ENCODE measurements at regions of chr10 and their contacts with region 1.

Region 1: DNA sequence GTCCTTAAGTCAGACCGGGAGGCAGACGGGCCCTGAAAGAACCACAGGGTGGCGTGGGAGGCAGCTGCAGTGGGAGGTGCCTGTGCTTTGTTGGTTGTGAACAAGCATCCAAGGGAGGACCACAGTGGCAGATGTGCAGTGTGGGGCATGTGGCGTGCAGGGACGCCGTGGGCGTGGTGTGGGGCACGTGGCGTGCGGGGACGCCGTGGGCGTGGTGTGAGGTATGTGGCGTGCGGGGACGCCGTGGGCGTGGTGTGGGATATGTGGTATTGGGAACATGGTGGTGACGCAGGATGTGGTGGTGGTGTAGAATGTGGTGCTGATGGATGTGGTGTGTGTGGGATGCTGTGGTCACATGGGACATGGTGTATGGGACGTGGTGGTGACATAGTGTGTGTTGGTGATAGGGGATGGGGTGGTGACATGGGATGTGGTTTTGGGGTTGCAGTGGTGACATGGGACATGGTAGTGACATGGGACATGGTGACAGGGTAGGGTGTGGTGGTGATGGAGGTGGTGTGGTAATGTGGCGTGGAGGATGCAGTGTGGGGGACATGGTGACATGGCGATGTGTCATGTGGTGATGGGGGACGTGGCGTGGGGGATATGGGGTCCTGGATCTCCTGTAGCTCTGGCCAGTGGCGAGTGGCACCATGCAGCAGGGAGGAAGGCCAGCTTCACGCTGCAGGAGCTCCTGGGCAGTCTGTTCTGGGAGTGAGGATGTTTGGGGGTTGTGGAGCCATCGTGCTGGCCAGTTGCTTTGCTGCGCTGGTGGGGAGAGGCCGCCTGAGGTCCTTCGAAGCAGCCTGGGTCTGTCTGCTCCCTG is 78.8 kb downstream of the INPP5A start:
- DNase-seq: peak; percentile 76 to 83
- ATAC-seq: peak; percentile 72 to 84 (median 83)
- H3K4me3 ChIP-seq: no peak overlapping the region
- H3K4me3 Mint-ChIP-seq: peak overlapping the region; percentile 59
- H3K27ac ChIP-seq: peak overlapping the region; percentile 44
- H3K27ac Mint-ChIP-seq: peak overlapping the region; percentile 73 to 99
- H3K4me1 ChIP-seq: peaks cover 34% of the 10 kb centered on the region
- H3K4me1 Mint-ChIP-seq: peaks cover 17 to 37% of the 10 kb centered on the region in 2 donors
- H3K27me3 ChIP-seq: no peaks in the 10 kb centered on the region
- H3K27me3 Mint-ChIP-seq: peaks cover 0 to 8% of the 10 kb centered on the region in 2 donors
- CTCF ChIP-seq: no peak

Region 2: DNA sequence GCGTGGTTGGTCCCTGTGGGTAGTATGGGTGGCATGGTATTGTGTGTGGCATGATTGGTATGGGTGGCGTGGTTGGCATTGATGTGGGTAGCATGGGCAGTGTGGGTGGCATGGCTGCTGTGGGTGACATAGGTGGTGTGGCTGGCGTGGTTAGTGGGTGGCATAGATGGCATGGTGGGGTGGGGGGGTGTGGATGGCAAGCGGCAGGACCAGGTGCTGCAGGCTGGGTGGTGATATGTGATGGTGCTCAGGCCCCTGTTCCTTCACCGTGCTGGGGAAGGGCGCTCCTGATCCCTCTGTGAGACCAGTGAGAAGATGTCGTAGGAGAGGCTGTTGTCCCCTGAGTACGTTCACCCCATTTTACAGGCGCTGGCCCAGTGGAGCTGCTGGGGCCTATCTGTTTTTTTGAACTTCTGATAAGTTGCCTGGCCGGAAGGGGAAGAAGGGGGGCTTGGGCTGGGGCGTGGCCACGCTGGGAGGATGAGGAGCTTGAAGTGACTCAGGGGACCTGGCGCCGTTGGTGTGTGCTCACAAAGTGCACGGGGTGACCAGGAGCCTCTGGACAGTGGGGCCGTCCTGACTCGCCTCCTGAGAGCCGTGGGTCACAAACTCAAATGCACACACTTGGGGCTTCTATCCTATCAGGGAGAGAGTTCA is 61.3 kb before region 1 on chr10:
- intact Hi-C with region 1: loop called (anchors 5 kb)
- DNase-seq: peak; percentile 64
- ATAC-seq: peak; percentile 59 to 74 (median 62)
- H3K4me3 ChIP-seq: peak overlapping the region; percentile 21
- H3K4me3 Mint-ChIP-seq: no peak overlapping the region
- H3K27ac ChIP-seq: peak overlapping the region; percentile 68
- H3K27ac Mint-ChIP-seq: no peak overlapping the region
- H3K4me1 ChIP-seq: peaks cover 54% of the 10 kb centered on the region
- H3K4me1 Mint-ChIP-seq: peaks cover 26 to 32% of the 10 kb centered on the region in 2 donors
- H3K27me3 ChIP-seq: no peaks in the 10 kb centered on the region
- H3K27me3 Mint-ChIP-seq: peaks cover 11 to 18% of the 10 kb centered on the region in 2 donors
- CTCF ChIP-seq: no peak

Region 3: DNA sequence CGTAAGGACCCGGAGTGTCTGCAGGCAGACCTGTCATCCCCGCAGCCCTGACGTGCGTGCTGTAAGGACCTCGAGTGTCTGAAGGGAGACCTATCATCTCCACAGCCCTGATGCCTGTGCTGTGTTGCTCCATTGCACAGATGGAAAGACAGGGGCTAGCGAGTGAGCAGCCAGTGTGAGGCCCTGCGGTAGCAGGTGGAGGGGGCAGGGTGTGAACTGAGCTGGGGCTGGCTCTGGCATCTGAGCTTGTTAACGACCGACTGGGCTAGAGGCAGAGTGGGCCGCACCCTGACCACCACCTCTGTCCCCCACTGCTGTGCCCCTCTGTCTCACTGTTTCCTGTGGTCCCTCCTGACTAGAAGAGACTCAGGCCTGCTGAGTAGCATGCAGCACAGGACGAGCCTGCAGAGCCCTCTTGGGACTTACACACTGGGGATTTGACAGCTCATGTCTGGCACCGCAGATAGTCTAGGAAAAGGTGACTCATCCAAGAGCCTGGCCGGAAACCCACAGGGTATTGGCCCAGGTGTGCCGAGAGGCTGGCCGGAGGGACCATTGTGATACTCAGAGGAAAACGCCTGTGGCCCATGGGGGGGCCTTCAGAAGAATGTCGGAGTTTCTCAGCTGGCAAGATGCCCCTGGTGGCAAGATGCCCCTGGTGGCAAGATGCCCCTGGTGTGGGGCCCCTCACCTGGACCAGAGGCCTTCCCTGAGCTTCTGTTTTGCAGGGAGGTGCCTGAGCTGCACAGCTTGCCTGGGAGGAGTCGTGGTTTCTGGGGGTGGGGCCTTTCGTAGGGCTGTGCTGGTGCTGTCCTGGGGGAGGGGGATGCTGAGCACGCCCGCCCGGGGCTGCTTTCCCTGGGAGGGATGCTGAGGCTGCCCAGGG is 44.5 kb before region 1 on chr10:
- intact Hi-C with region 1: loop called (anchors 1 kb)
- DNase-seq: peak; percentile 48 to 50
- ATAC-seq: peak; percentile 42 to 60 (median 58)
- H3K4me3 ChIP-seq: no peak overlapping the region
- H3K4me3 Mint-ChIP-seq: no peak overlapping the region
- H3K27ac ChIP-seq: peak overlapping the region; percentile 68
- H3K27ac Mint-ChIP-seq: no peak overlapping the region
- H3K4me1 ChIP-seq: peaks cover 54% of the 10 kb centered on the region
- H3K4me1 Mint-ChIP-seq: peaks cover 5 to 18% of the 10 kb centered on the region in 2 donors
- H3K27me3 ChIP-seq: no peaks in the 10 kb centered on the region
- H3K27me3 Mint-ChIP-seq: no peaks in the 10 kb centered on the region
- CTCF ChIP-seq: peak; percentile 14

Region 4: DNA sequence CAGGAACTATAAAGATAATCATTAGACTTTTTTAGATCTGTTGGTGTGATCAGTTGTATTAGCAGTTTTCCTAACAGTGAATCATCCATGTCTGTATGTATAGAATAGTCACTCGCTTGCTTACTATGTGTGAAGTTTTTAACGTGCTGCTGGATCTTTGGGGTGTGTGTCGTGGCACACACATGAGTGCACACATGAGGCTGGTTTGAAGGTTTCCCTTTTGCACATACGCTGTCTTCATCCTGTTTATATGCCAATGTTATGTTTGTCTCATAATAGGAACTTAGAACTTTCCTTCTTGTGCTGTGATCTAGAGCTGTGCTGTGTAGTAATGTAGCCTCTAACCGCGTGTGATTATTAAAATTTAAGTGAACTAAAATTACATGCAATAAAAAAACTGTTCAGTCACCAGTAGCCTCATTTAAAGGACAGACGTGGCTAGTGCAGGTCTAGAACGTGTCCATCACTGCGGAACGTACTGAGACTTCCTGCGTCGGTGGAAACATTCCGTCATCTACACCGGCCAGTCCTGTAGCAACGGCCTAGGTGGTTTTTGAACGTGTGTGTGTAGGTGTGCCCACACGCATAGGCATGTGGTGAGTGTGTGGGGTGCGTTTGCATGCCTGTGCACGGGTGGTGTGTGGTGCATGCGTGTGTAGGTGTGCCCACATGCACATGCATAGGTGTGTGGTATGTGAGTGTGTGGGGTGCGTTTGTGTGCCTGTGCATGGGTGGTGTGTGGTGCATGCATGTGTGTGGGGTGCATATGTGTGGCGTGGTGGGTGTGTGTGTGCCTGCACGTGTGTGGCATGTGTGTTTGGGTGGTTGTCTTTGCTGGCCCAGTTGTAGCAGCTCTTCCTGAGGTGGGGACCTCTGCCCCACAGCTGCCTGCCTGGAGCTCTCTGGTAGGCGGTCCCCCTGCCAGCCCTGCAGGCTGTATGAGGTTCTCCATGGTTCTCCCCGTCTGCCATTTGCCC is 22.2 kb before region 1 on chr10:
- intact Hi-C with region 1: loop called (anchors 2 kb)
- DNase-seq: no peak
- ATAC-seq: peak; percentile 18 to 66 (median 26)
- H3K4me3 ChIP-seq: no peak overlapping the region
- H3K4me3 Mint-ChIP-seq: peak overlapping the region; percentile 41
- H3K27ac ChIP-seq: peak overlapping the region; percentile 67
- H3K27ac Mint-ChIP-seq: peak overlapping the region; percentile 84 to 89
- H3K4me1 ChIP-seq: peaks cover 29% of the 10 kb centered on the region
- H3K4me1 Mint-ChIP-seq: peaks cover 31 to 60% of the 10 kb centered on the region in 2 donors
- H3K27me3 ChIP-seq: no peaks in the 10 kb centered on the region
- H3K27me3 Mint-ChIP-seq: no peaks in the 10 kb centered on the region
- CTCF ChIP-seq: no peak

Region 5: DNA sequence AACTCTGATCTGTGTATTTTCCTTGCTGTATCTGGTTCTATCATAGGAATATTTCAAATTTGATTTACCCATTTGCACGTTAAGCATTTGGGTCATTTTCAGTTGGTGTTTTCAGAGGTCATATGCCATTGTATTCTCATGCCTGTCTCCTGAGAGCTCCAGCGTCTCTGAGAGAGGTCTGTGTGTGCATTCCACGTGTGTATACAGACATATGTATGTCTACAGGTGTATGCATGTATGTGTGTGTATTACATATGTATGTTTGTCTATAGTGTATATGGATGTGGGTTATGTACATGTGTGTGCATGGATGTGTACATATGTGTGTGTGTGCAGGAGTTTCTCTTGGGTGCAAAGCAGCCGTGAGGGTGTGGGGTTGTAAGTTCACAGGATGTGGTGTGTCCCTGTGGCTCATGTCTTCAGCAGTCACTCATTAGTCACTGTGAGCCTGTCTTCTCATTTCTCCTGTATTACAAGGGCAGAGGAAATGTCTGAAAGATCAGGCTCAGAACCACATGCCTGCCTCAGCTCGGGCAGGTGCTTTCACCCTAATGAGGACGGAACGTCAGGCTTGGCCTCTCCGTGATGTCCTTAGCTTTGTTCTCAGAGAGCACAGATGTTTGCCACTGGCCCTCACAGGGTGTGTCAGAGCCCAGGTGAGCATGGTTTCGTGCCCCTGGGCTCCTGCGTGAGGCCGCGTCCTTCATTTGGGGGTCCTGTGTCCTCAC is 67.9 kb after region 1 on chr10:
- intact Hi-C with region 1: loop called (anchors 10 kb)
- DNase-seq: peak; percentile 47 to 52
- ATAC-seq: peak; percentile 83 to 96 (median 86)
- H3K4me3 ChIP-seq: no peak overlapping the region
- H3K4me3 Mint-ChIP-seq: peak overlapping the region; percentile 59
- H3K27ac ChIP-seq: peak overlapping the region; percentile 46
- H3K27ac Mint-ChIP-seq: peak overlapping the region; percentile 45 to 79
- H3K4me1 ChIP-seq: peaks cover 29% of the 10 kb centered on the region
- H3K4me1 Mint-ChIP-seq: peaks cover 45 to 55% of the 10 kb centered on the region in 2 donors
- H3K27me3 ChIP-seq: no peaks in the 10 kb centered on the region
- H3K27me3 Mint-ChIP-seq: no peaks in the 10 kb centered on the region
- CTCF ChIP-seq: no peak